A549 (cell line): ENCODE measurements at regions of chr14 and their contacts with region 1.

Region 1: DNA sequence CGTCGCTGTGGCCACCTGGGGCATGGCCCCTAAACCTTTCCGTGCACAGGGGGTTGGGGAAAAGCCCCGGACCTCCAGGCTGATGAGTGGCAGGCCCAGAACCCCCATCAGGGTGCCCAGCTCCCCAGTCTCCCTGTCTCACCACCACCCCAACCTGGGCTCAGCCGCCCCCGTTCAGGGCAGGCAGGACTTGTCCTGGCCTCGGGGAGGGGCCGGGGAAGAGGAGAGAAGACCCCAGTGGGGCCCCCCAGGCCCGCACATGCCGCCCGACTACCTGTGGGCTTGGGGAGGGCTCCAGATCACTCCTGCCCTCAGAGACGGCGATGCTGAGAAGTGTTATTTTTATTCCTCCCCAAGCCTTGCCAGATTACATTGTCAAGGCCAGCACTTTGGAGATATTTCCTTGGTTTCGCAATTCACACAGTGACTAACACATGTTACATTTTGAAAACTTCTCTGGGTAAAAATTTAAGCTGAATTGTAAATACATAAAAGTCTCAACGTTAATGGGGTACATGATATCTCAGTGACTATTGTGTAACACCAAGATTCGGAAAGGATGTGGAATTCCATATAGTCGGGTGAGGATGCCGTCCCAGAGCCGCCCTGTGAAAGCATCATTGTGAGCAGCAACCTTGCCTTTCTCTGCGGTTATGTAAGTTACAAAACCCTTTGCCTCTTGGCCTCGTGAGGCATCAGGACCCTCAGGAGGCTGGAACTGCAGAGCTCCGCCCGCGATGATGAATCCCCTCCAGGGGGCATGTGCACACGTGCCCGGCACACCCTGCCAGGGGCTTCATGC is 85.6 kb upstream of the DIO3 start:
- DNase-seq: peak; percentile 72 to 85
- ATAC-seq: peak; percentile 44 to 49
- H3K4me3 ChIP-seq: peak overlapping the region; percentile 66
- H3K27ac ChIP-seq: peak overlapping the region; percentile 97 to 99
- H3K4me1 ChIP-seq: peaks cover 56% of the 10 kb centered on the region
- CTCF ChIP-seq: no peak
- EP300 ChIP-seq: peak; percentile 92; a peak in 3 of 5 replicates
- POLR2A ChIP-seq: no peak
- RAD21 ChIP-seq: peak in 1 of 2 experiments; percentile 60; a peak in 3 of 5 replicates

Region 2: DNA sequence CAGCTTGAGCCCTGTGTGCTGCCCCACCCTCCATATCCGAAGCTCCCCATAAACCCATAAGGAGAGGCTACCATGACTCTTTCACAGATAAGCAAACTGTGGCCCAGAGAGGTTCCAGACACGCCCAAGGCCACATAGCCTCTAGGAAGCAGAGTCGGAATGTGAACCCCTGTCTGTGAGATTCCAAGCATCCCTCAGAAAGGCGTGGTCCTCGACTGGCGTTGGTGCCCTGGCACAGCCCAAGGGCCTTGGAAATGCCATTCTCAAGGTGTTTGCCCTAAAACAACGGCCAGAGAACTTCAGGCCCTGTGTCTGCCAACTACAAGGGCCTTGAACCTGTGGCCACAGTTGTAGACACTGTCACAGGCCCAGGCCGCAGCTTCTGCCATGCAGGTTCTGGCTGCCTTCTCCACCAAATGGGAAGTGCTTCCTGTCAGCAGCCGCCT is 77.2 kb after region 1 on chr14:
- CTCF ChIA-PET with region 1: interaction called, 10 read pairs
- POLR2A ChIA-PET with region 1: interaction called, 12 read pairs
- DNase-seq: peak; percentile 83 to 92
- ATAC-seq: peak; percentile 62 to 88
- H3K4me3 ChIP-seq: no peak overlapping the region
- H3K27ac ChIP-seq: peak overlapping the region; percentile 56 to 80; a peak in 5 of 6 replicates
- H3K4me1 ChIP-seq: peaks cover 50% of the 10 kb centered on the region
- CTCF ChIP-seq: no peak
- EP300 ChIP-seq: peak in 1 of 2 experiments; percentile 54; a peak in 1 of 5 replicates
- POLR2A ChIP-seq: no peak
- RAD21 ChIP-seq: no peak

Region 3: DNA sequence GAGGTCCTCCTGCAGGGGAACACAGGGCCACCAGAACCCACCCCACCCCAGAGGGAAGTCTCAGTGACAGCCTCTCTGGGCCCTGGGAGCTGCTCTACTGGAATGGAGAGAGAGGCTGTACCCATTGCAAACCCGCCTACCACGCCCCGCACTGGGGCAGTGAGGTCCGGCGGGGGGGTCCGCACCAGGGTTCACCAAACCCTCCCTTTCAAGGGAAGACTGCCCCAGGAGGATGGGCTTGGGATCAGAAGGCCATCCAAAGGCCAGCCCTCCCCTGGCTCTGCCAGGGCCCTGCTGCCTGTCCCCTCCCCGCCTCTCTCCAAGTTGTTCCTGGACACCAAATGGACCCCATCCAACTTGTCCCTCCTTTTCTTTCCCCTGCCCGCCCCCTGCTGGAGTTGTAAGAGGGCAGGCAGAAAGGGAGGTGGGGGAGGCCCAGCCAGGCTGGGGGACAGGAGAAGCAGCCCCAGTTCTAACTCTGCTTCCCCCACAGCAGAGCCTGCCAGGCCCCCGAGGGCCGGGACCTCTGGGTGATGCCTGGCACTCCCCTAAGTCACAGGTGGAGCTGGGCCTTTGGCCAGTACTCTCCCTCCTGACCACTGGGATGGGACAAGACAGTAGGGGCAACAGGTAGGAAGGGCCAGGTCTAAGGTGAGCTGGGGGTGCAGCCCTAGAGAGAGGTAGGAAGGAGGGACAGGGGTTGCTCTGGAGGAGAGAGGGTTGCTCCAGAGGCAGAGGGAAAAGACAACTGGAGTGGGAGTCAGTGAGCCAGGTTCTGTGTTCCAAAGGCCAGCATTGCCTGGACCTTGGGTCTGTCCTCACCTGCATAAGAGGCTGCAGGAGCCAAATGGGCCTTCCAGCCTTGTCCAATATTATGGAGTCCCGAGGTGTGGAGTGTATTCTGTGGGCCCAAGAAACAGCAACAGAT is 82.4 kb after region 1 on chr14:
- CTCF ChIA-PET with region 1: interaction called, 10 read pairs
- POLR2A ChIA-PET with region 1: interaction called, 12 read pairs
- DNase-seq: peak in 1 of 2 experiments; percentile 62
- ATAC-seq: peak in 1 of 2 experiments; percentile 62; a peak in 3 of 6 replicates
- H3K4me3 ChIP-seq: no peak overlapping the region
- H3K27ac ChIP-seq: peak overlapping the region; percentile 25 to 80; a peak in 4 of 6 replicates
- H3K4me1 ChIP-seq: peaks cover 44% of the 10 kb centered on the region
- CTCF ChIP-seq: peak; percentile 21
- EP300 ChIP-seq: no peak
- POLR2A ChIP-seq: no peak
- RAD21 ChIP-seq: peak; percentile 49 to 60; a peak in 4 of 5 replicates

Region 4: DNA sequence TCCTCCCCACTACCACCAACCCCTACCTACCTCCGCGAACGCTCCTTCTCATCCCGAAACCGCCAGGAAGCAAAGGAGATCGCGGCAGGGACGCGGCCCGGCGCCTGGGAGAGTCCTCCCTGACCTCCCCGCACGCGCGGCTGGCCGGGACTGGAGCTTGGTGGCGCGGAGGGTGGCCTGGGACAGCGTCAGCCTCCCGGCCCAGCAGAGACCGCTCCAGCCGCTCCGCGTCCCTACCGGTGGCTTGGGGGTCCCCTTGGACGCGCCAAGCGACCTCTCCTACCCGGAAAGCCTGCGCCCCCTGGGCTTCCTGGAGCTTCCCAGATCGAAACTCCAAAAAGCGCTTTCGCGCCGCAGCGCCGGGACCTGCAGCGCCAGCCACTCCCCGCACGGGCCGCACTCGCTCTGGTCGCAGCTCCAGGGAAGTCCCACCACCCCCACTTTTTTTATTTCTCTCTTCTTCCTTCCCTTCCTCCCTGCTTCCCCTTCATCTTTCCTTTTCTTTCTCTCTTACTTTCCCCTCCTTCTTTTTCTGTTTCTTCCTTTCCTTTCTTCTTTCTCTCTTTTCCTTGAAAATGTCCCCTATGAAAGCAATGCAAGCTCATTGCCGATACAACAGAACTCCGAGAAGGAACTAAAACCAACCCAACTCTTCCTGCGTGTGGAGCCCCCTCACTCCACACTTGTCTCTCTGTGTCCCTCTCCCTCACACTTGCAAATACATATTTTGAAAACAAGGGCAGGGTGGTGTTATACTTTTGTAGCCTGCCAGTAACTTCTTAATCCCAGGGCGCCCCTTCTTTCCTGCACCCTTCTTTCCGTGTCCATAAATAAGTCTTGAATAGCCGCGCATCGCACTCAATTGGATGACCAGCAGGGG is 89.4 kb after region 1 on chr14:
- CTCF ChIA-PET with region 1: interaction called, 8 read pairs
- POLR2A ChIA-PET with region 1: interaction called, 11 read pairs
- DNase-seq: peak in 1 of 2 experiments; percentile 56
- ATAC-seq: peak; percentile 75 to 84
- H3K4me3 ChIP-seq: peak overlapping the region; percentile 58
- H3K27ac ChIP-seq: peak overlapping the region; percentile 74 to 89
- H3K4me1 ChIP-seq: no peaks in the 10 kb centered on the region
- CTCF ChIP-seq: no peak
- EP300 ChIP-seq: no peak
- POLR2A ChIP-seq: no peak
- RAD21 ChIP-seq: peak in 1 of 2 experiments; percentile 26; a peak in 1 of 5 replicates